Breast epithelium (tissue), 4 donors: ENCODE measurements at regions of chr2 and their contacts with region 1.

Region 1: GRCh38 chr2:126329173-126329572 is 326.8 kb upstream of the GYPC start:
- DNase-seq: no peak
- H3K4me3 ChIP-seq: no peak overlapping the region
- H3K27ac ChIP-seq: no peak overlapping the region
- H3K4me1 ChIP-seq: no peaks in the 10 kb centered on the region
- H3K27me3 ChIP-seq: no peaks in the 10 kb centered on the region
- CTCF ChIP-seq: no peak
- POLR2A ChIP-seq: no peak

Region 2: GRCh38 chr2:126272401-126272800 is 56.8 kb before region 1 on chr2:
- intact Hi-C with region 1: loop called (anchors 2 kb)
- DNase-seq: no peak
- H3K4me3 ChIP-seq: no peak overlapping the region
- H3K27ac ChIP-seq: no peak overlapping the region
- H3K4me1 ChIP-seq: no peaks in the 10 kb centered on the region
- H3K27me3 ChIP-seq: no peaks in the 10 kb centered on the region
- CTCF ChIP-seq: no peak
- POLR2A ChIP-seq: no peak

Region 3: GRCh38 chr2:127261804-127262406 is 932.7 kb after region 1 on chr2:
- intact Hi-C with region 1: no loop called
- DNase-seq: no peak
- H3K4me3 ChIP-seq: no peak overlapping the region
- H3K27ac ChIP-seq: no peak overlapping the region
- H3K4me1 ChIP-seq: no peaks in the 10 kb centered on the region
- H3K27me3 ChIP-seq: no peaks in the 10 kb centered on the region
- CTCF ChIP-seq: no peak
- POLR2A ChIP-seq: no peak